ENCODE measurements at regions of chr5 and their contacts with region 1.

Region 1: GRCh38 chr5:40688127-40688761 is 8.5 kb downstream of the PTGER4 start:
- DNase-seq: peak; percentile 63
- ATAC-seq: peak; percentile 82
- H3K4me3 Mint-ChIP-seq: peak overlapping the region; percentile 70
- H3K27ac Mint-ChIP-seq: peak overlapping the region; percentile 57
- H3K4me1 Mint-ChIP-seq: peaks cover 70% of the 10 kb centered on the region
- H3K27me3 Mint-ChIP-seq: no peaks in the 10 kb centered on the region
- CTCF ChIP-seq: no peak

Region 2: GRCh38 chr5:39599721-39600431 is 1088.4 kb before region 1 on chr5:
- CTCF ChIA-PET with region 1: no interaction called
- POLR2A ChIA-PET with region 1: no interaction called
- intact Hi-C with region 1: loop called (anchors 1 kb)
- DNase-seq: no peak
- ATAC-seq: no peak
- H3K4me3 Mint-ChIP-seq: no peak overlapping the region
- H3K27ac Mint-ChIP-seq: no peak overlapping the region
- H3K4me1 Mint-ChIP-seq: no peaks in the 10 kb centered on the region
- H3K27me3 Mint-ChIP-seq: peaks cover 18% of the 10 kb centered on the region
- CTCF ChIP-seq: no peak

Region 3: GRCh38 chr5:40021007-40021406 is 667.2 kb before region 1 on chr5:
- CTCF ChIA-PET with region 1: interaction called, 11 read pairs
- POLR2A ChIA-PET with region 1: no interaction called
- intact Hi-C with region 1: loop called (anchors 1 kb)
- DNase-seq: no peak
- ATAC-seq: no peak
- H3K4me3 Mint-ChIP-seq: no peak overlapping the region
- H3K27ac Mint-ChIP-seq: no peak overlapping the region
- H3K4me1 Mint-ChIP-seq: peaks cover 27% of the 10 kb centered on the region
- H3K27me3 Mint-ChIP-seq: no peaks in the 10 kb centered on the region
- CTCF ChIP-seq: no peak

Region 4: GRCh38 chr5:40223884-40224402 is 464.3 kb before region 1 on chr5:
- CTCF ChIA-PET with region 1: interaction called, 3 read pairs
- POLR2A ChIA-PET with region 1: no interaction called
- intact Hi-C with region 1: loop called (anchors 2 kb)
- DNase-seq: no peak
- ATAC-seq: peak; percentile 63
- H3K4me3 Mint-ChIP-seq: peak overlapping the region; percentile 21
- H3K27ac Mint-ChIP-seq: peak overlapping the region; percentile 79
- H3K4me1 Mint-ChIP-seq: peaks cover 45% of the 10 kb centered on the region
- H3K27me3 Mint-ChIP-seq: peaks cover 5% of the 10 kb centered on the region
- CTCF ChIP-seq: no peak

Region 5: DNA sequence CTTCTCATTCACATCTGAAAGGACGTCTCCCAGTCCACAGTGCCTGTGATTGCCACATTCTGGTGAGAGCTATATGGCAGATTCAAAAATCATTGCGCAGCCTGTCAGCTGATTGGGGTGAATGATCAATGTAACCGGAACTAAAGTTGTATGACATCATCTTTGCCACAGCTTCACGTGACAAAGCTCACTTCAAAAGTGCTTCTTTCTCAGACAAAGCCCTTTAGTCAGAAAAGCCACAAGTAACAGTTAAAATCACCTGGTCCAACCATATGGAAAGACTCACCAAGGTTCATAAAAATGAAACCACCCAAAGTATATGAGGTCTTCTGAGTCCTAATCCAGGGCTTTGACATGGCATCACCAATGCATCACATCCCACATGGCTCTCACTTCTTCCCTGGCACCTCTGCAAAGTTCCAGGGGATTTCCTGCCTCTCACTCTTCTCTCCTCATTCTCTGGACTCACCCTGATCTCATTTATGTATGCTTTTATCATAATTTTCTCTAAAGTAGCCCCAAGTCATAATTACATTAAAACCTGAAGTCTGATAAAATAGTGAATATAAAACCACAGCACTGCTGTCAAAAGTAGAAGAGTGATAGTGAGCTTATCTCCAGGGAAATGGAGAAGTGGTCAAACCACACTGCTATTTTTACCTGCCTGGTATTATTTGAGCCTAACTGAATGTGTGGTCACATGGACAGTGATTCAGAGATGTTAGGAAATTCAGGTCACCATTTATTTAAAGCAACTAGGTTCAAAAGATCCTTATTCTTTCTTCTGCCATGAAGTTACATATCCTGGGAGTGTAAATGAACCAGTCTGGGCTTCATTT is 201.6 kb before region 1 on chr5:
- CTCF ChIA-PET with region 1: interaction called, 4 read pairs
- POLR2A ChIA-PET with region 1: interaction called, 9 read pairs
- intact Hi-C with region 1: loop called (anchors 2 kb)
- DNase-seq: no peak
- ATAC-seq: peak; percentile 38
- H3K4me3 Mint-ChIP-seq: peak overlapping the region; percentile 64
- H3K27ac Mint-ChIP-seq: peak overlapping the region; percentile 87
- H3K4me1 Mint-ChIP-seq: peaks cover 82% of the 10 kb centered on the region
- H3K27me3 Mint-ChIP-seq: no peaks in the 10 kb centered on the region
- CTCF ChIP-seq: no peak

Measured in activated B cell treated with CpG ODN at 0.5 μM for 24 hours (primary cell).